Common myeloid progenitor, CD34-positive (primary cell): ENCODE measurements at regions of chr6 and their contacts with region 1.

Region 1: GRCh38 chr6:37169496-37170272 is at the start of gene PIM1:
- DNase-seq: peak; percentile 96 to 98 (median 98)
- H3K4me3 ChIP-seq: peak within 1 kb of the TSS; percentile 74 to 98 (median 97)
- H3K27ac ChIP-seq: peak within 1 kb of the TSS; percentile 80 to 93
- H3K4me1 ChIP-seq: peaks cover 23 to 39% (median 31%) of the 10 kb centered on the region in 4 experiments
- H3K27me3 ChIP-seq: no peaks in the 10 kb centered on the region

Region 2: DNA sequence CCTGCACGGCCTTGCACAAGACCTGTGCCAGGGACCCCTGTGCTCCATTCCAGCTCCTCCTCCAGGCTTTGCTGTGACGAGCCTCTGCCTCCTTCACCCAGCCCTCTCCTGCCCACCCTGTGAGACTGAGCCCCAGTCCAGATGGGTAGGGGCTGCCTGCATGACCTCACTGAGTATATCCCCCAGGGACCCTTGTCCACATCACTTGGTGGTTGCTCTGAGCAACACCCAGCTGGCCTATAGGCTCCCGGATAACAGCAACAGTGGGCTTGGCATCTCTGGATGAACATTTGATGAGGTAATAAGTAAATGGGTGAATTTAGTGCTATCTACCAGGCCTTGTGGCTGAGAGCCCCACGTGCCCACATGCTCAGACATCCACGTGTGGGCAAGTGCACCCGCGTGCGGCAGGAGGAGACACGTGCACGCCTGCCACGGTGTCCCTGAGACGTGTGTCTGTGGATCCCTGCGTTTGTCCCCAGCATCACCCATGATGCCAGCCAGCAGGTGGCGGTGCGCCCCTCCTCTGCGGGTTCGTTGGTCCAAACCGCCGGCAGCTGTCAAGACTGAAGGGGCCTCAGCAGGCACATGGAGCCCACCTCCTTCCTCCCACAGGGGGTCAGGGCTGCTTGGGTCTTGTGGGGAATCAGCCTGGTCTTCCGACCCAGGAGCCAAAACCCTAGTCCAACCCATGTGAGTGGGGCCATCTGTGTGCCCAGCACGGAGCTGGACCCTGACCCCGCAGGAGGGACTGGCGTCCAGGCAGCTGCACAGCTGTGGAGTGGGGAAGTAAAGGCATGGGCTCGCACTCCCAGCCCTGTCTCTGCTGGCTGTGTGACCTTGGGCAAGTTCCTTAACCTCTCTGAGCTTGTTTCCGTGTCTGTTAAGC is 118.3 kb before region 1 on chr6:
- CTCF ChIA-PET with region 1: interaction called, 415 read pairs
- POLR2A ChIA-PET with region 1: interaction called, 35 read pairs
- DNase-seq: peak; percentile 89 to 94 (median 94)
- H3K4me3 ChIP-seq: peak overlapping the region in 3 of 7 experiments; percentile 7 to 58 (median 29)
- H3K27ac ChIP-seq: peak overlapping the region in 1 of 2 experiments; percentile 86
- H3K4me1 ChIP-seq: peaks cover 14 to 77% (median 53%) of the 10 kb centered on the region in 4 experiments
- H3K27me3 ChIP-seq: no peaks in the 10 kb centered on the region

Region 3: DNA sequence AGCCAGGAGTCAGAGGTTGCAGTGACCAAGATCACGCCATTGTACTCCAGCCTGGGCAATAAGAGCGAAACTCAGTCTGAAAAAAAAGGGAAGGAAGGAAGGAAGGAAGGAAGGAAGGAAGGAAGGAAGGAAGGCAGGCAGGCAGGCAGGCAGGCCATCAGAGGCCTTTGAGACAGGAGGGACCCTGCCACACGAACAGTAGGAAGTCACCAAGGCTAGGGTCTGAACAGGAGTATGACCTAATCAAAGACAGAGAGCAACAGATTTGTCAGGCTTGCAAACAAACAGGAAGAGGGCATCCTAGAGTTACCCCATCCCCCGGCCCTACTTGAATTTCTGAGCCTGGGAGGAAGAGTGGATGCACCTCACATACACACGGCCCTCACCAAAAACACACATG is 97.2 kb before region 1 on chr6:
- CTCF ChIA-PET with region 1: no interaction called
- POLR2A ChIA-PET with region 1: no interaction called
- DNase-seq: peak in 1 of 3 donors; percentile 23
- H3K4me3 ChIP-seq: no peak overlapping the region
- H3K27ac ChIP-seq: no peak overlapping the region
- H3K4me1 ChIP-seq: peaks cover 3 to 24% (median 8%) of the 10 kb centered on the region in 4 experiments
- H3K27me3 ChIP-seq: no peaks in the 10 kb centered on the region

Region 4: DNA sequence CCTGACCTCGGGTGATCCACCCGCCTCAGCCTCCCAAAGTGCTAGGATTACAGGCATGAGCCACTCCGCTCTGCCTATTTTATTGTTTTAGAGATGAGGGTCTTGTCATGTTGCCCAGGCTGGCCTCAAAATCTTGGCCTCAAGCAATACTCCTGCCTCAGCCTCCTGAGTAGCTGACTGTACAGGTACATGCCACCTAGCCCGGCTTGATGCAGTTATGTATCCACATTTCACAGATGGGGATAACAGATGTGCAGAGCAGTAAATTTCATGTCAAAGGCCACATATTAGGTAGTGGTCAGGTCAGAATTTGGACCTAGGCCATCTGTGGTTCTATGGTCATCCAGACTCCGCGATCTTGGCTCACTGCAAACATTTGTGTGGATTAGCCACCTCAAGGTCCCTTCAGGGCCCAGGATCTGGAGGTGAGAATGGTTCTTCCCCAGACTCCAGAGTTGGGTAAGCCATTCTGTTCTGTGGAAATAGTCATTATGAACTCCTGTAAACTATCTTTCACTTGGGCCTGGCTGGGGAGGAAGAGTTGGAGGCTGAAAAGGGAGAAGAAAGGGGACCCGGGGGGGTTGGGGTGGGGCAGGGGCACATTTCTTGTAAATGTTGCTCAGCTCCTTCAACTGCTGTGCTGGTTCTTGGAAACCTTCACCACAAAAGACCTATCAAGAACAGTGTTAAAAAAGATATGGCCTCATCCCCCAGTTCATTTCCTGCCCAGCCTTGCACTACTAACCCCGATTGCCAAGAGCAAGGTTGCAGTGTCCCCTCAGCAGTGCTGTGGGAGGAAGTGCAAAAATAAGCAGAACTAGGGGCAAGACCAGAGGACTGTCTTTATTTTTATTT is 13.3 kb after region 1 on chr6:
- CTCF ChIA-PET with region 1: interaction called, 33 read pairs
- POLR2A ChIA-PET with region 1: interaction called, 10 read pairs
- DNase-seq: peak; percentile 94 to 99 (median 98)
- H3K4me3 ChIP-seq: peak overlapping the region in 3 of 7 experiments; percentile 30 to 51 (median 30)
- H3K27ac ChIP-seq: peak overlapping the region; percentile 64 to 85
- H3K4me1 ChIP-seq: peaks cover 14 to 76% (median 66%) of the 10 kb centered on the region in 4 experiments
- H3K27me3 ChIP-seq: no peaks in the 10 kb centered on the region

Region 5: DNA sequence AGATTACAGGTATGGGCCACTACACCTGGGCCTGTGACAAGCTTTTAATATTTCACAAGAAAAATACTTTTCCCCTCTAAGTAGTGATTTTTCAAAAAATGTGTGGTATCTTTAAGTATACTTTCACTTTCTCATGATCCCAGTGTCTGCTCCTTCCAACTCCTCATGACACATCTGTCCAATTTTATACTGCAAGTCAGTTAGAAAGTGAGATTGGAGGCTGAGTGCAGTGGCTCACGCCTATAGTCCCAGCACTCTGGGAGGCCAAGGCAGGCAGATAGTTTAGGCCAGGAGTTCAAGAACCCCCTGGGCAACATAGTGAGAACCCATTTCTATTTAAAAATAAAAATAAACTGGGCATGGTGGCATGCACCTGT is 20.5 kb after region 1 on chr6:
- CTCF ChIA-PET with region 1: interaction called, 89 read pairs
- POLR2A ChIA-PET with region 1: interaction called, 8 read pairs
- DNase-seq: peak in 2 of 3 donors; percentile 73 to 81
- H3K4me3 ChIP-seq: peak overlapping the region in 1 of 7 experiments; percentile 15
- H3K27ac ChIP-seq: peak overlapping the region; percentile 25 to 85
- H3K4me1 ChIP-seq: peaks cover 16 to 85% (median 60%) of the 10 kb centered on the region in 4 experiments
- H3K27me3 ChIP-seq: no peaks in the 10 kb centered on the region

Region 6: DNA sequence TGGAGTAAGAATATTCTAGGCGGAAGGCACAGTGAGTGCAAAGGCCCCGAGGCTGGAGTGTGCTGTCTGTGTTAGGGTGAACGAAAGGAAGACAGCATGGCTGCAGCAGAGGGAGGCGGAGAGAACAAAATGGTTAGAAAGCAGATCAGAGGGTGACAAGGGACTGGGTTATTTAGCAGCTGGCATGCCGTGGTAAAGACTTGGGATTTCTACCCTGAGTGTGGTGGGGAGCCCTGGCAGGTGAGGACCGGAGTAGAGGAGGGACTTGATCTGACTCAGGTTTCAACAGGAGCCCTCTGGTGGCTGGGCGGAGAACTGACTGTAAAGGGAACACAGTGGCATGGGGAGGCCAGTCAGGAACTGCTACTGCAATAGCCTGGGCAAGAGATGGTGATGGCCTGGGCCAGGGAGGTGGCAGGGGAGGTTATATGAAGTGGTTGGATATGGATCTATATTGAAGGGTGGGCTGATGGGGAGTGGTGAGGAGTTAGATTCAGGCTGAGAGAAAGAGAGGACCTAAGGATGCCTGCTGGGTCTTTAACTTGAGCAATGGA is 38.3 kb after region 1 on chr6:
- CTCF ChIA-PET with region 1: interaction called, 423 read pairs
- POLR2A ChIA-PET with region 1: interaction called, 8 read pairs
- DNase-seq: peak; percentile 87 to 92 (median 90)
- H3K4me3 ChIP-seq: no peak overlapping the region
- H3K27ac ChIP-seq: no peak overlapping the region
- H3K4me1 ChIP-seq: peaks cover 10 to 61% (median 53%) of the 10 kb centered on the region in 4 experiments
- H3K27me3 ChIP-seq: no peaks in the 10 kb centered on the region

Region 7: GRCh38 chr6:37283671-37284151 is 114.0 kb after region 1 on chr6:
- CTCF ChIA-PET with region 1: no interaction called
- POLR2A ChIA-PET with region 1: no interaction called
- DNase-seq: no peak
- H3K4me3 ChIP-seq: no peak overlapping the region
- H3K27ac ChIP-seq: no peak overlapping the region
- H3K4me1 ChIP-seq: peaks cover 5 to 33% (median 11%) of the 10 kb centered on the region in 4 experiments
- H3K27me3 ChIP-seq: no peaks in the 10 kb centered on the region

Region 8: GRCh38 chr6:38482466-38482865 is 1312.8 kb after region 1 on chr6:
- CTCF ChIA-PET with region 1: no interaction called
- POLR2A ChIA-PET with region 1: no interaction called
- DNase-seq: no peak
- H3K4me3 ChIP-seq: no peak overlapping the region
- H3K27ac ChIP-seq: no peak overlapping the region
- H3K4me1 ChIP-seq: peaks cover 0 to 8% (median 3%) of the 10 kb centered on the region in 4 experiments
- H3K27me3 ChIP-seq: no peaks in the 10 kb centered on the region